Esophagus muscularis mucosa (tissue), 4 donors: ENCODE measurements at regions of chr1 and their contacts with region 1.

Region 1: DNA sequence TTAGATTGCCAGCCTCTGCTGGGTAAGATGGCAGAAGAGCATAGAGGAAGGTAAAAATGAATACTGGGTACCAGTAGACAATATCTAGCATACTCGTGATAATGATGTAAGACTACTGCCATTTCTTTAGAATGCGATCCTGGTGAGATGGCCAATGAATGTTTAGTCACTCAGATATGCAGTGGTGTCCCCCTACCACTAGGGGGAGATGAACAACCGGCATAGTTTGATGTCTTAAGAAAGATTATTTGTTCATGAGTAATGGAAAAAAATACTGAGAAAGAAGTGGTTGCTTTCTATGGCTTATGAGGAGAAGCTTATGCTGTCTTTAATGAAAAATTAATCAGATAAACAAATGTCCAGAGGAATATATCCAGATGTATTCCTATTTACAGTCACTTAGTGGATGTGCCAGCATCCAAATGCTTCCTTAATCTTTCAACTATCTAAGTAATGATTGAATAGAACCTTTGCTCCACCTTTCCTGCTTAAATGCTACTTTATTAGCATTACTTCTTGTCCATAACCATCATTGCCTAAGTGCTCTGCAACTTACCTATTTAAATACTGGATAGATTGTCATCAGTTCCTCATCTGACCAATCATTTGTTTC is 256.6 kb downstream of the ST6GALNAC3 start:
- DNase-seq: no peak
- H3K4me3 ChIP-seq: no peak overlapping the region
- H3K27ac ChIP-seq: no peak overlapping the region
- H3K4me1 ChIP-seq: peaks cover 0 to 7% (median 0%) of the 10 kb centered on the region in 4 donors
- H3K27me3 ChIP-seq: no peaks in the 10 kb centered on the region
- CTCF ChIP-seq: peak; percentile 51 to 80 (median 78)
- EP300 ChIP-seq: no peak
- POLR2A ChIP-seq: no peak

Region 2: DNA sequence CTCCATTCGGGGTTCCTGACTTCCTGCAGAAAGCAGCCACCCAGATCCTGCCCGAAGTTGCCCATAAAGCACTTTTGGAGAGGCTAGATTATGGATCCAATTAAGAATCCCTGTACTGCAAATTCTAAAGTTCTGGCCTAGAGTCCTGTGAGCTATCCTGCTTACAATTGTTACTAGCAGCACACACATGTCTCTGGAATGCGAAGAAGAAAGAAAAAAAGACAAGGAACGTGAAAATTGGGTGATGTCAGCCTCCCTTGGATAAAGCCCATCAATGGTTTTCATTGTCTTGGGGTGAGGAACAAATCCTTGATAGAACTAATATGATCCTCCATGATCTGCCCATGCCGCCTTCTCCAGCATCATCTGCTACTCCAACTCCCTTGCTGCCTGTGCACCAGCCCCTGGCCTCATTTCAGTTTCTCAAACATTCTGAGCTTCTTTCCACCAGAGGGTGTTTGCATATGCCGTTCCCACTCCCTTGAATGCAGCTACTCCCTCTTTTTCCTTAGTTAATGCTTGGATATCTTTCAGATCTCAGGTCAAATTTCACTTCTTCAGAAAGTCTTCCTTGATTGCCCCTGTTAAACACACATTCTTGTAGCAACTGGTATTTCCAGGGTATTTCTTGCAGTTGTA is 630.2 kb after region 1 on chr1:
- intact Hi-C with region 1: no loop called
- DNase-seq: no peak
- H3K4me3 ChIP-seq: no peak overlapping the region
- H3K27ac ChIP-seq: no peak overlapping the region
- H3K4me1 ChIP-seq: no peaks in the 10 kb centered on the region
- H3K27me3 ChIP-seq: no peaks in the 10 kb centered on the region
- CTCF ChIP-seq: no peak
- EP300 ChIP-seq: no peak
- POLR2A ChIP-seq: no peak

Region 3: GRCh38 chr1:77126307-77126706 is 795.2 kb after region 1 on chr1:
- intact Hi-C with region 1: loop called (anchors 10 kb)
- DNase-seq: no peak
- H3K4me3 ChIP-seq: no peak overlapping the region
- H3K27ac ChIP-seq: no peak overlapping the region
- H3K4me1 ChIP-seq: no peaks in the 10 kb centered on the region
- H3K27me3 ChIP-seq: no peaks in the 10 kb centered on the region
- CTCF ChIP-seq: peak; percentile 26 to 48 (median 46)
- EP300 ChIP-seq: no peak
- POLR2A ChIP-seq: no peak